ENCODE measurements at regions of chr7 and their contacts with region 1.

Region 1: DNA sequence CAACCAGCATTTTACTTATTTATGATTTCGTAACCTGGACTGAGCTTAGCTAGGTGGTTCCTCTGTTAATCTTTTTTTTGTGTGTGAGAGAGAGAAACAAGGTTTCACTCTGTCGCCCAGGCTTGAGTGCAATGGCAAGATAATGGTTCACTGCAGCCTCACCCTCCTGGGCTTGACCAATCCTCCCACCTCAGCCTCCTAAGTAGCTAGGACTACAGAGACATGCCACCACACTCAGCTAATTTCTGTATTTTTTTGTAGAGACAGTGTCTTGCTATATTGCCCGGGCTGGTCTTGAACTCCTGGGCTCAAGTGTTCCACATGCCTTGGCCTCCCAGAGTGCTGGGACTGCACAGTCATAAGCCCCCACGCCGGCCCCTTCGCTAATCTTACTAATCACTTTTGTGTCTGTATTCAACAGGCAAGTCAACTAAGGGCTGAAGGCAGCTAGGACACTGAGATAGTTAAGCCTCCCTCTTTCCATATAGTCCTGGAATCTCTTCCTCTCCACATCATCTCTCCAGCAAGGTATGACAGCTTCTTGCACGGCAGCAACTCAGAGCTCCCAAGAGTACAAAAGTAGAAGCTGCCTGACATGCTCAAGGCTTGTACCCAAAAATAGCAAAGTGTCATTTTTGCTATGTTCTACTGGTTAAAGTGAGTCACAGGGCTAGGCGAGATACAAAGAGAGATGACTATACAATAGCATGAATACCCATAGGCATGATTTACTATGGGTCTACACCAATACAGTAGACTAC is 11.3 kb downstream of the KMT2C start:
- DNase-seq: no peak
- ATAC-seq: no peak

Region 2: DNA sequence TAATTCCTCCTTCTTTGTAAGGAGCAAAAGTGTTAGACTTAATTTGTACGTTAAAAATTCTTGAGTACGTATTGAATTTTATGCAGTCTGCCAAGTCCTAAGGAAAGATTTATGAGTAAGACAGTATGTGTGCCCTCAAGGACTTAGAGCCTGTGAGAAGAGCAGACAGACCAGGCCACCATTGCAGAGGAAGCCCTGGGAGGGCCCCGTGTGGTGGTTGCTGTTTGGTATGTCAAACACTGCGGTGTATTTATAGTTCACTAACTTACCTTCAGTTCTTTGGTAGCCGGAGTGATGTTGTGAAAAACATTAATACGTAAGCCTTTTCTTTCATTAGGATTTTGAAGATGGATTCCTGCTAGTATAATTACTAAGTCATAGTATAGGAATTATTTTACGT is 316.2 kb before region 1 on chr7:
- intact Hi-C with region 1: no loop called
- DNase-seq: no peak
- ATAC-seq: peak; percentile 83

Region 3: DNA sequence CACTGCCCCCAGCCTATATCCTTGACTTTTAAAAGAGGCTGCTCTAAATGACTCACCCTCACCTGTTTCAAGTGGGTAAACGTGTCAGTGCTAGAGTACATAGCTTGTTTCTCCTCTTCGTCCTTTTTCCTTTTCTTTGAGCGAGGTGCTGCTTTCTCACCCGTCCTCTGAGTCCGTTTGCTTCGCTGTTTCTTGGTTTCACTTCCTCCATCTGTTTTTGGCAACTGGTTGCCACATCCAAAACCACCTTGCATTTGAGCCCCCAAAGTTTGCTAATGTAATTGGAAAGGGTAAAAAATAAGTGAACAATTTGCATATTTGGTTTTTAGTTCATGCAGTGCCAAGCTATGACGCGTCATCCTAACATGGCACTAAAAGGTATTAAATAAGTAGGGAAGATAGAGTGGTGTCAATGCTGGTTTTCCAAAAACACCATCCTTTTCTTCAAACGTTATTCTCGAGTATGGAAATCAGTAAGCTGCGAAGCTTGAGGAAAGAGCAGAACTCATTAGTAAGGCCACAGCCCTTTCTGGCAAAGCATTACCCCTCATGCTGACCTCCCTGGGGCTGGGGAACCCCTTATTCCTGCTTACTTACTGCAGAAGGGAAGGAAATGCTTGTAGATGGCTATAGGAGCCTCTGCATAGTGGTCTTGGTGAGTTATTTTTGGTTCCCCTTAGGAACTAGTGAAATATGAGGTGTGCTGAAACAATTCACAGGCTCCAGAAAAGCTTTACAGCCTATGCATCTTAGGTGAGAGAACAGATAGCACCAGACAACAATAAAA is 265.5 kb before region 1 on chr7:
- intact Hi-C with region 1: no loop called
- DNase-seq: no peak
- ATAC-seq: no peak

Region 4: DNA sequence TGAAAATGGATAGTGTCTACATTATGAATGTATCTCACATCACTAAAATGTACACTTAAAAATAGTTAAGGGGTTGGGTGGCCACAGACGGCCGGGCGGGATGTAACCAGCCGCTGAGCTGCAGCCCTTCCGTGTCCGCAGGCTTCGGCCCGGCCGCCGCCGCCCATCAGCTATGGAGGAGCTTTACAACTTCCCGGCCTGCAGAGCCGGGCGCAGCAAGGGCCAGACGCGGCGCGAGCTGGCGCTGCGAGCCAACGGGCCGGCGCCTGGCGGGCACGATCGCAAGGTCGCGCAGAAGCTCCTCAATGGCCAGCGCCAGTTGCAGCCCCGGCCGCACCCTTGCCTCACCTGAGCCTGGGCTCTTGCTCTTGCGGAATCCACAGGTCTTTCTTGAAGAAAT is 57.9 kb before region 1 on chr7:
- intact Hi-C with region 1: loop called (anchors 10 kb)
- DNase-seq: peak; percentile 68
- ATAC-seq: peak; percentile 60

Region 5: DNA sequence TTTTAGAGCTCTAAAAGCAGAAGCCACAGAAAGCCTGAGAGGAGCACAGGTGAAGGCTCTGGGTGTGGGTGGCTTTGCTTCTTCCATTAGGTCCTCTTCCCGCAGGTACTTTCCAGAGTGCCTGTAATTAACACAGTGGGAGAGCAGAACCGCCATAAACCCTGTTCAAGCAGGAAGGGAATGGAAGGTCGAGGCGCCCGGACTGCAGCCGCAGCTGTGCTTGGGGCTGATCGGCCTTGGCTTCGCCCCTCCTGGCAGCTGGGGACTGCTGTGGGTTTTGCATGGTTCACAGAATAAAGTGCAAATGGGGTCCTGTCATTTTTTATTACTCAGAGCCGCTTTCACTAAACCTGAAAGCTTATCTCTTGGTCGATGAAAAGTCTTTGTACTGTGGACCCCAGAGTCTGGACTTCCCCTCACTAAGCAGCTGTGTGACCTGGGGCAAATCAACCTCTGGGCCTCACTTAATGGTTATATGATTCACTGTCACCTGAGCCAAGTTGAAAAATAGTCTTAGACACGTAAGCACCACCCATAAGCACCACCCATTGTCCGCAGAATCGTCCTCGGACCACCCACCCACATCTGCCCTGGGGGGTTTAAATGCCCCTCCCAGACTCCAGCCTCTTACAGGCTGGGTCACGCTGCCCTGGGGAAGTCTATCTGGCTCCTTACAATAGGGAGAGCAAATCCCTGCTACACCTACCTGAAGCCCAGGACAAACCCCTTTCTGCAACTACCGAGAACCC is 150.5 kb after region 1 on chr7:
- intact Hi-C with region 1: no loop called
- DNase-seq: no peak
- ATAC-seq: no peak

Region 6: DNA sequence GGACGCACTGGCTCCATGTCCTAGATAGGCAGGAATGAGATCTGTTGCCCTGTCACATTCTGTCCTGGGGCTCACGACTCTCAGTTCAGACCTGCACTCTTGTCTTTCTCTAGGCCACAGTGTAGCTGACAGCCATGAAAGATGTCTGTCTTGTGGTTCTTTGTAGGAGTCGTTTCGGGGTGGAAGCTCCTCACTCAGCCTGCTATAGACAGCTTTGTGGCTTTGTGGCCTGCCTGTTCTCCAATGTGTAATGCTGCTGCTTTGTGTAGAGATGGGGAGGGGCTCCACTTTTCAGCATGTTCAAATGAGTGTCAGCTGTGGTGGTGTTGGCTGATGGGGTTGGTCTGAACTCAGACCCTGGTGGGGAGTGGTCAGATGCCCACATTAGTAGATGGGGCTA is 745.8 kb after region 1 on chr7:
- intact Hi-C with region 1: no loop called
- DNase-seq: no peak
- ATAC-seq: no peak